RWPE1 (cell line): ENCODE measurements at regions of chr12 and their contacts with region 1.

Region 1: DNA sequence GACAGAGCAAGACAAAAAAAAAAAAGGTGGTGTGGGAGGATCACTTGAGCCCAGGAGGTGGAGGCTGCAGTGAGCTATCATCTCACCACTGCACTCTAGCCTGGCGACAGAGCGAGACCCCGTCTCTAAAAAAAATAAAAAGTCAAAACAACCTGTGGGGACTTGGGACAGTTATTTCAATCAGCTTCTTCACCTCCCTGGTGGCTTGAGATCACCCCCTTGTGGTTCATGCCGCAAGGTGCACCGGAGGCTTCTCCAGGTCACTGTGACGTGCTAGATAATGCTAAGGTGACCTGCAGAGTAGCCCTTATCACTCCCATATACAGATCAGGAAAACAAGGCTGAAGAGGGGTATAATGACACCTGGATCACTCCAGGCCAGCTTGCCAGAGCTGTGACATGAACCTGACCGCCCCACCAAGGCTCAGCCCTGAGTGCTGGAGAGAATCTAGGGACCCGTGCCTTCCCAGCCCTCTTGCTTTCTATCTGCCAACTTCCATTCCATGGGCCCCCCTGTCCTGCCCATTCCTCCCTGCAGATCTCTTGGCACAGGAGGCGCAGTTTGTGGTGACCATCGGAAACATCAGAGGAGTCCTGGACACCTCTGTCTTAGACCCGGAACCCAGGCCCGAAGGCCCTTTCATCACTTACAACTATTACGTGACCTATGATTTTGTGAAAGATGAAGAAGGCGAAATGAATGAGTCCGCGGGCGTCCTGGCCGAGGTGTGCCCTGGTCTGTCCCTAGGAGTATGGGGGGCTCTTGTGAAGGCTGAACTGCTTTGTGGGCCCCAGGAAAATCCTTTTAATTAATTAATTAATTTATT is 8.1 kb downstream of the LRRC43 start:
- DNase-seq: peak; percentile 74
- H3K27ac ChIP-seq: no peak overlapping the region
- CTCF ChIP-seq: peak; percentile 79

Region 2: GRCh38 chr12:122054842-122055520 is 136.1 kb before region 1 on chr12:
- CTCF ChIA-PET with region 1: interaction called, 10 read pairs
- POLR2A ChIA-PET with region 1: no interaction called
- DNase-seq: no peak
- H3K27ac ChIP-seq: peak overlapping the region; percentile 56
- CTCF ChIP-seq: no peak

Region 3: DNA sequence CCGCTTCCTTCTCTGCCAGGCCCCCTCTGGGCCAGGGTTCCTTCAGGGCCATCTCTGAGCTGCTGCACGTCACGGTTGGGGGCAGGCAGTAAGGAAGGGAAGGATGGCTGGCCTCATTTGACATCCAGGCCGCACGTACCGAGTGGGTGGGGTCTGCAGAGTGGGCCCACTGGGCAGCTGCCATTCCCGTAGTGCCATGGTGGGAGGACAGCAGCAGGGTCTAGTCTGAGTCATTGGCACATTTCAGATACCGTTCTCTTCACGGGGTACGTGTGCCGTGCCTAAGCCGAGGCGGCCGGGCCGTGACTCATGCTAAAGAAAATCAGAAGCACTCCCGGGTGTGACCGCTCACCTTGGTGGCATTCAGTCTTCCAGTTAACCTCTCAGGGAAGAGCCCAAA is 60.9 kb before region 1 on chr12:
- CTCF ChIA-PET with region 1: interaction called, 17 read pairs
- POLR2A ChIA-PET with region 1: no interaction called
- DNase-seq: peak; percentile 71
- H3K27ac ChIP-seq: peak overlapping the region; percentile 80
- CTCF ChIP-seq: no peak

Region 4: DNA sequence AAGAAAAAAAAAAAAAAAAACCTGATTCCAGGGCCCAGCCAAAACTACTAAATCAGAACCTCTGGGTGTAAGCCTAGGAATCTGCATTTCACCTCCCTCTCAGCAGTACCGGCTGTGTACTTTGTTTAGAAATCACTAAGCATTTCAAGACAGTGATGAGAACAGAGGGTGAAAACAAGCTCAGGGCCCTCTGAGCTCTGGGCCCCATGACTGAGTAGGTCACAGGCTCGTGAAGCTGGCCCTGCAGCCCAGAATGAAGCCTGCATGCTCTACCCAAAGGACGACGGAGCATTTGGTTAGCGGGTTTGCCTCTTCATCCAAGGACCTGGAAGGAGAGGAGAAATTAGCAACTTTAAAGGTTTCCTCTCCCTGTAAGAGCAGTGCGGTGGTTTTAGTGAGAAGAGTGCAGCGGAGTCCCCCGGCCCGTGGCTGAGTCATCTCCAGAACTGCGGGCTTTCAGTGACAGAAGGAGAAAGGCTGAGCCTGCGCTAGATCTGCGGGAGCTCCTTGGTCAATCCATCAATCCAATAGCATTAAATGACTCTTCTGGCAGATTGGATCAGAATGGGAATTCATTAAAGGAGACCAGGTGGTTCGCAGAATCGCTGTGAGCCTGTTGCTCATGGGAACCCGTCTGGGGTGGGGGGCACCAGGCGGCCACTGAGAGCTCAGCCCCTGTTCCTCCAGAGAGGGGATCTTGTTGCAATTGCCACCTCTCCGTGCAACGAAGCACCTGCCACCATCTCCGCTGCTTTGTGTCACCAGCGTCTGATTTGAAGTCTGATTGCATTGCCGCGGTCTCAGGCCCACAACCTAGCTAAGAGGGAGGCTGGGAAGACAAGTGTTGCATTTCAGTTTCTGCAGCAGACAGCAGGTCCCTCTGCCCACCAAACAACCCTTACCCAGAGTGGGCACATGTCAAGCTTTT is 24.4 kb before region 1 on chr12:
- CTCF ChIA-PET with region 1: no interaction called
- POLR2A ChIA-PET with region 1: no interaction called
- DNase-seq: no peak
- H3K27ac ChIP-seq: no peak overlapping the region
- CTCF ChIP-seq: no peak

Region 5: GRCh38 chr12:122244565-122245371 is 53.7 kb after region 1 on chr12:
- CTCF ChIA-PET with region 1: no interaction called
- POLR2A ChIA-PET with region 1: no interaction called
- DNase-seq: peak; percentile 34
- H3K27ac ChIP-seq: no peak overlapping the region
- CTCF ChIP-seq: no peak